Heart left ventricle (tissue), 16 donors: ENCODE measurements at regions of chr4 and their contacts with region 1.

Region 1: GRCh38 chr4:121112530-121112929 is 40.2 kb upstream of the NDNF start:
- DNase-seq: no peak
- ATAC-seq: no peak
- H3K4me3 ChIP-seq: no peak overlapping the region
- H3K27ac ChIP-seq: no peak overlapping the region
- H3K4me1 ChIP-seq: no peaks in the 10 kb centered on the region
- H3K27me3 ChIP-seq: peaks cover 0 to 4% (median 0%) of the 10 kb centered on the region in 9 donors
- CTCF ChIP-seq: peak; percentile 25 to 57 (median 44)
- POLR2A ChIP-seq: no peak

Region 2: DNA sequence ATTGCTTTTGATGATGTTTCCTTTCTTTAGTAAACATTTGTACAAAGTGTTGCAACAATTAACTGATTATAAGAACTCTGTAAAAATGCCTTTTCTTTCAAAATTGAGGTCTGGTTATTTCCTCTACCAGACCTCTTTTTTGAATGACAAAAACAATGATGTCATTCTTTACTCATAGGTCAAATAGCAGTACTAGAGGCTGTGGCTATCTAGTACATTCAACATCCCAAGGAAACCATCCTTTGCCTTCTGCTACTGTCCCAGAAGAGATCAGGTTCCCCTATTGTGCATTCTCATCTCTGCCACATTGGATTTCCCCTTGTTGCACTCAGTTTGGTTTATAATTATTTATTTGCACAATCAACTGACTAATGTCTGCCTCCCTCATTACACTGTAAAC is 1026.8 kb before region 1 on chr4:
- intact Hi-C with region 1: loop called in 1 of 10 experiments (anchors 10 kb)
- DNase-seq: no peak
- ATAC-seq: no peak
- H3K4me3 ChIP-seq: no peak overlapping the region
- H3K27ac ChIP-seq: no peak overlapping the region
- H3K4me1 ChIP-seq: peaks cover 0 to 3% (median 0%) of the 10 kb centered on the region in 12 donors
- H3K27me3 ChIP-seq: no peaks in the 10 kb centered on the region
- CTCF ChIP-seq: no peak
- POLR2A ChIP-seq: no peak